ENCODE measurements at regions of chr2 and their contacts with region 1.

Region 1: GRCh38 chr2:85288244-85288725 is 39.5 kb downstream of the TGOLN2 start:
- DNase-seq: peak; percentile 23
- ATAC-seq: no peak
- H3K4me3 ChIP-seq: no peak overlapping the region
- H3K27ac ChIP-seq: peak overlapping the region; percentile 41; the same call in 1 of the 2 replicates
- H3K4me1 ChIP-seq: peaks cover 11 to 22% of the 10 kb centered on the region in 2 experiments; a peak in 3 of 4 replicates
- H3K27me3 ChIP-seq: no peaks in the 10 kb centered on the region
- CTCF ChIP-seq: no peak
- POLR2A ChIP-seq: no peak
- RAD21 ChIP-seq: no peak

Region 2: GRCh38 chr2:85132834-85133637 is 155.2 kb before region 1 on chr2 and contains the start of gene TCF7L1:
- CTCF ChIA-PET with region 1: interaction called, 7 read pairs
- POLR2A ChIA-PET with region 1: no interaction called
- RAD21 ChIA-PET with region 1: interaction called in 1 of 2 experiments, 5 read pairs
- intact Hi-C with region 1: loop called (anchors 1 kb)
- DNase-seq: peak; percentile 70
- ATAC-seq: peak; percentile 92
- H3K4me3 ChIP-seq: peak within 1 kb of the TSS; percentile 63 to 71
- H3K27ac ChIP-seq: peak within 1 kb of the TSS; percentile 42; the same call in 1 of the 2 replicates
- H3K4me1 ChIP-seq: peaks cover 12 to 22% of the 10 kb centered on the region in 2 experiments; a peak in 3 of 4 replicates
- H3K27me3 ChIP-seq: no peaks in the 10 kb centered on the region
- CTCF ChIP-seq: peak; percentile 58 to 83 (median 81); a peak in 5 of 6 replicates
- POLR2A ChIP-seq: peak; percentile 22
- RAD21 ChIP-seq: peak; percentile 75
- total RNA-seq, gene TCF7L1: 10.3 TPM

Region 3: DNA sequence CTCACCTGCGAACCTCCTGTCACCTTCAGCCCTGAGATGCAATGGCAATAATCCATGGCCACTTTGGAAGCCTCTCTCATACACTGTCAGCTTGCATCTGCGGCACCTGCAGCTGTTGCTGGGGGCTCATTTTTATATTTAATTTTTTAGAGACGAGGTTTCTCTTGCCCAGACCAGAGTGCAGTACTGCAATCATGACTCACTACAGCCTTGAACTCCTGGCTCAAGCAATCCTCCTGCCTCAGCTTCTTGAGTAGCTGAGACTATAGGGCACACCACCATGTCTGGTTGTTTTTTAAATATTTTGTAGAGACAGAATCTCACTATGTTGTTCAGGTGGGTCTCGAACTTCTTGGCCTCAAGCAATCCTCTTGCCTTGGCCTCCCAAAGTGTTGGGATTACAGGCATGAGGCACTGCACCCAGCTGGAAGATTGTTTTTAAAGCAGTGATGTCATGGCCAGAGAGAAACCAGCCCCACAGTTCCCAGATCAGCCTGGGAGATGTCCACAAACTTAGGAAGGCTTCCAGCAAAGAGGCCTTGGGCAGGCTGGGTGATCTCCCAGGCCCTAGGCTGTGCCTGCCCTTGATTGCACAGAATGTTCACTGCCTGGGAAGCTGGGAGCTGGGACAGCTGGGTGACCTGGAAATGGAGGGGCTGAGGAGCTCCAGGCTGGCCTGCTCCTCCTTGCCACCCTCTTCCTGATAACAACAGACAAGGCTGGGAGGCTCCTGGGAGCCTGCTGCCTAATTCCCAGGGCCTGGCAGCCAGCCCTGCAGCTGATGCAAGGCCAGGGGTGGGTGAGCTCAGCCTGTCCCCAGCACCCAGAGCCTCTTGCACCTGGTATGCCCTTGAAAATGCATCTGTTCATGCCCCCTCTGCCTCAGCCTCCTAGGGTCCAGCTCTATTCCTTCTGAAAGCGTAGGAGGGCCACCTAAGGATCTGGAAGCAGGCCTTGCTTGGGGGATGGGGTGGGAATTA is 157.3 kb after region 1 on chr2:
- CTCF ChIA-PET with region 1: no interaction called
- POLR2A ChIA-PET with region 1: no interaction called
- RAD21 ChIA-PET with region 1: no interaction called
- intact Hi-C with region 1: no loop called
- DNase-seq: no peak
- ATAC-seq: peak; percentile 53; the same call in 1 of the 2 replicates
- H3K4me3 ChIP-seq: no peak overlapping the region
- H3K27ac ChIP-seq: peak overlapping the region; percentile 46; the same call in 1 of the 2 replicates
- H3K4me1 ChIP-seq: peaks cover 22 to 26% of the 10 kb centered on the region in 2 experiments
- H3K27me3 ChIP-seq: no peaks in the 10 kb centered on the region
- CTCF ChIP-seq: no peak
- POLR2A ChIP-seq: no peak
- RAD21 ChIP-seq: no peak